ENCODE measurements at regions of chr1 and their contacts with region 1.

Region 1: DNA sequence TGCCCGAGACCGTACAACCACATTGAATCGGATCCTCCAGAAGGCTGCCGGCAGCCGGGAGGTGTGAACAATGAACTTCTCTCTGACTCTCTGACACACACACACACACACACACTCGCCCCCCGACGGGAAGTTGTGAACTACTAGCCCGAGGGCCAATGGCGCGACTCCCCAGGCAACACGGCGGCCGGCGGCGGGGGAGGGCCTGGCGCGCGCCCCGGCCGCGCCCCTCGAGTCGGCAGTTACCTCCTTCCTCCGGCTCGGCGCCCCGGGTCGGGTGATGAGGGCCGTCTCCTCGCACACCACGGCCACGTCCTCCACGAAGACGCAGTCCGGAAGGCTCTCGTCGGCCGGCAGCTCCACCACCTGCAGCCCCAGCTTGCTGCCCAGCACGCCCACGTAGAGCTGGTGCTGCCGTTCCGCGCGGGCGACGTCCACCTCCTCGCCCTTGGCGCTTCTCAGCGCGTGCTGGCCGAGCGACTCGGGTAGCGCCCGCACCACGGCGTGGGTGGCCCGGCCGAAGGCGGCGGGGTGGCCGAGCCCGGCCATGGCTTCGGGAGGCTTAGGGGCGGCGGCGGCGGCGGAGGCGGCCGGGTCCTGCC is 361 bp downstream of the DDAH1 start:
- DNase-seq: peak; percentile 73
- ATAC-seq: peak; percentile 80
- H3K4me3 ChIP-seq: peak overlapping the region; percentile 95
- H3K27ac ChIP-seq: peak overlapping the region; percentile 92
- H3K4me1 ChIP-seq: peaks cover 7% of the 10 kb centered on the region
- H3K27me3 ChIP-seq: no peaks in the 10 kb centered on the region
- CTCF ChIP-seq: no peak
- POLR2A ChIP-seq: peak; percentile 47; the same call in 1 of the 2 replicates
- RAD21 ChIP-seq: no peak; the same call in 1 of the 2 replicates

Region 2: GRCh38 chr1:85360730-85361493 is 103.7 kb before region 1 on chr1:
- CTCF ChIA-PET with region 1: no interaction called
- POLR2A ChIA-PET with region 1: no interaction called
- dilution Hi-C with region 1: no loop called
- in situ Hi-C with region 1: no loop called
- intact Hi-C with region 1: loop called (anchors 5 kb)
- DNase-seq: peak; percentile 87
- ATAC-seq: peak; percentile 68
- H3K4me3 ChIP-seq: no peak overlapping the region
- H3K27ac ChIP-seq: peak overlapping the region; percentile 70
- H3K4me1 ChIP-seq: peaks cover 15% of the 10 kb centered on the region
- H3K27me3 ChIP-seq: no peaks in the 10 kb centered on the region
- CTCF ChIP-seq: no peak
- POLR2A ChIP-seq: no peak
- RAD21 ChIP-seq: no peak

Region 3: GRCh38 chr1:85398391-85399064 is 66.1 kb before region 1 on chr1:
- CTCF ChIA-PET with region 1: interaction called, 3 read pairs
- POLR2A ChIA-PET with region 1: no interaction called
- dilution Hi-C with region 1: no loop called
- in situ Hi-C with region 1: no loop called
- intact Hi-C with region 1: loop called (anchors 5 kb)
- DNase-seq: peak; percentile 71
- ATAC-seq: peak; percentile 32
- H3K4me3 ChIP-seq: no peak overlapping the region
- H3K27ac ChIP-seq: peak overlapping the region; percentile 0; the same call in 1 of the 2 replicates
- H3K4me1 ChIP-seq: peaks cover 9% of the 10 kb centered on the region
- H3K27me3 ChIP-seq: no peaks in the 10 kb centered on the region
- CTCF ChIP-seq: peak; percentile 52
- POLR2A ChIP-seq: no peak
- RAD21 ChIP-seq: peak; percentile 61

Measured in IMR-90 (cell line).